Adrenal gland (tissue), 19 donors: ENCODE measurements at regions of chr12 and their contacts with region 1.

Region 1: GRCh38 chr12:113092607-113093408 is 36.3 kb downstream of the DTX1 start:
- DNase-seq: peak in 2 of 7 donors; percentile 40 to 42
- H3K4me3 ChIP-seq: no peak overlapping the region
- H3K27ac ChIP-seq: no peak overlapping the region
- H3K4me1 ChIP-seq: peaks cover 0 to 4% of the 10 kb centered on the region in 2 donors
- H3K27me3 ChIP-seq: no peaks in the 10 kb centered on the region
- CTCF ChIP-seq: no peak
- POLR2A ChIP-seq: no peak

Region 2: GRCh38 chr12:112341046-112341825 is 751.6 kb before region 1 on chr12:
- intact Hi-C with region 1: no loop called
- DNase-seq: no peak
- H3K4me3 ChIP-seq: no peak overlapping the region
- H3K27ac ChIP-seq: no peak overlapping the region
- H3K4me1 ChIP-seq: no peaks in the 10 kb centered on the region
- H3K27me3 ChIP-seq: no peaks in the 10 kb centered on the region
- CTCF ChIP-seq: no peak
- POLR2A ChIP-seq: no peak

Region 3: DNA sequence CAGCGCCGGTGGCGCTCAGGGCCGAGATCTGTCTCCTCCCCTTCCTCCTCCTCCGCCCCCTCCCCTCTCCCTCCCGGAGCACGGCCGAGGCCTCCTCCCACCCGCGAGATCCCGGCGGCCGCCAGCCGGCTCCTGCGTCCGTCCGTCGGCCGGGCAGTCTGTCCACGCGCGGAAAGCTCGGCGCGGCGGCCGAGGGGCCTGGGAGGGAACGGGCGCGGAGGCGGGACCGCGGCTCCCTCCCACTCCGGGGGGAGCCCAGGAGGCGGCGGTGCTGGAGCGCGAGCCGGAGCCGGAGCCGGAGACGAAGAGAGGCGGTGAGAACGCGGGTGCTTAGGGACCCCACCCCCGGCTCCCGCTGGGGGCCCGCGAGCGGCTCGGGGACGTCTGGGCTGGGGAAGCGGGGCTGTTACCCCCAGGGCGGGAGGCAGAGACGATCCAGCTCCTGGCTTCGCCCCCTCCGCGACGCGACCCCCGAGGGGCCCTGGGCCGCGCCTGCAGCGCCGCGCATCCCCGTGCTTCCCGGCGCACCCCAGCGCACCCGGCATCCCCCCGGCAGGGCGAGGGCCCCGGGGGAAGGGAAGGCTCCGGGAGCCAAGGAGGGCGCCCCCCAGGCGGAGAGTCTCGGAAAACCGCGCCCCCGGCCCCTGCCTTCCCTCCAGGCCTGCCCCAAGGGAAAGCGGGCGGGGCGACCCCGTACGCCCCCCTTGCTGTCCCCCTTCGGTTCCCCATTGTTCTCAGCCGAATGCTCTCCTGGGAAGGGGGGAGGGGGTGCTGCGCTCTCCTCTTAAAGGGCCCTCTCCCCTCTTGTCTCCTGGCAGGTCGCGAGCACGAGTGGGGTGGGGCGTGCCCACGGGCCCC is 35.9 kb before region 1 on chr12 and contains the start of gene DTX1:
- intact Hi-C with region 1: loop called in 1 of 2 experiments (anchors 5 kb)
- DNase-seq: peak in 4 of 7 donors; percentile 26 to 50 (median 40)
- H3K4me3 ChIP-seq: peak within 1 kb of the TSS in 2 of 4 donors; percentile 28 to 64
- H3K27ac ChIP-seq: peak within 1 kb of the TSS in 2 of 5 donors; percentile 17 to 62
- H3K4me1 ChIP-seq: peaks cover 7 to 8% of the 10 kb centered on the region in 2 donors
- H3K27me3 ChIP-seq: peaks cover 9% of the 10 kb centered on the region
- CTCF ChIP-seq: no peak
- POLR2A ChIP-seq: no peak
- total RNA-seq, gene DTX1: 1.3 to 20.0 (median 7.4) TPM